ENCODE measurements at regions of chr1 and their contacts with region 1.

Region 1: GRCh38 chr1:176559878-176560277 is 96.9 kb downstream of the PAPPA2 start:
- DNase-seq: no peak
- H3K4me3 Mint-ChIP-seq: no peak overlapping the region
- H3K27ac Mint-ChIP-seq: no peak overlapping the region
- H3K4me1 Mint-ChIP-seq: no peaks in the 10 kb centered on the region
- H3K27me3 Mint-ChIP-seq: no peaks in the 10 kb centered on the region

Region 2: GRCh38 chr1:176691251-176692228 is 131.7 kb after region 1 on chr1:
- intact Hi-C with region 1: loop called (anchors 5 kb)
- DNase-seq: no peak
- H3K4me3 Mint-ChIP-seq: no peak overlapping the region
- H3K27ac Mint-ChIP-seq: no peak overlapping the region
- H3K4me1 Mint-ChIP-seq: no peaks in the 10 kb centered on the region
- H3K27me3 Mint-ChIP-seq: no peaks in the 10 kb centered on the region

Region 3: GRCh38 chr1:176880954-176881595 is 321.2 kb after region 1 on chr1:
- intact Hi-C with region 1: loop called (anchors 1 kb)
- DNase-seq: peak; percentile 19
- H3K4me3 Mint-ChIP-seq: no peak overlapping the region
- H3K27ac Mint-ChIP-seq: no peak overlapping the region
- H3K4me1 Mint-ChIP-seq: no peaks in the 10 kb centered on the region
- H3K27me3 Mint-ChIP-seq: no peaks in the 10 kb centered on the region

Measured in activated T-helper 2 cell treated with anti-CD3 and anti-CD28 coated beads, Interferon-gamma antibody, Interleukin-2, Interleukin-4, amounts not matched to agents 10 μg/mL and 5 μg/mL and 100 μg/mL, durations not matched to agents 14 hours and 24 hours and 36 hours (primary cell).